ENCODE measurements at regions of chr10 and their contacts with region 1.

Region 1: DNA sequence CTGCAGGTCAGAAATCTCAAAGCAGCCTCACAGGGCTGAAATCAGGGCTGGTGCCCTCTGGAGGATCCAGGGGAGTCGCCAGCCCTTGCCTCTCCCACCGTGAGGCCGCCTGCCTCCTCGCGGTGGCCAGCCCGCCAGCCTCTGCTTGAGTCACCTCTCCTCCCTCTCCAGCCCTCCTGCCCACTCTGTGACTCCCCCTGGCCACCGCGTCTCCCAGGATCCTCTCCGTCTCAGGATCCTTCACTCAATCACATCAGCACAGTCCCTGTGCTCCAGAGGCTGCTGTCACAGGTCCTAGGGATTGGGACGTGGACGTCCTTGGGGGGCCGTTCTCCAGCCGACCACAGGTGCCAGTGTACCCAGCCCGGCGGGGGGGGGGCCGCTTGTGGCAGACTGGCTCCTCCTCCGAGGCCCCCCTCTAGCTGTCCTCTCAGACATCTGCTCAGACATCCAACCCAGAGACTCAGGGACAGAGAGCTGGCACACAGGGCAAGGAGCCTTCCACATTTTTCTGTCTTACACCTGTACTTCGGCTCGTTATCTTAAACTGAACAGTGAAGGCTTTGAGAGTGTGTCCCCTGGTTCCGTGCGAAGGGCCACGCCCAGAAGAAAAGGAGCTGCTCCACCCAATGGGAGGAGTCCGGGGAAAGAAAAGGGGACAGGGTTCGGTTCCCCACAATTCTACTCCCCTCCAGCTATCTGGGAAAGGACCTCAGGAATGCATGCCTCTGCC is 9.4 kb upstream of the PPP2R2D start:
- DNase-seq: peak; percentile 62 to 69 (median 64)
- ATAC-seq: peak; percentile 85
- H3K4me3 ChIP-seq: peak overlapping the region; percentile 35
- H3K27ac ChIP-seq: peak overlapping the region; percentile 78
- H3K4me1 ChIP-seq: peaks cover 35 to 47% of the 10 kb centered on the region in 2 experiments
- H3K27me3 ChIP-seq: no peaks in the 10 kb centered on the region
- CTCF ChIP-seq: peak; percentile 30 to 88 (median 68); a peak in 5 of 6 replicates
- EP300 ChIP-seq: no peak
- POLR2A ChIP-seq: no peak
- RAD21 ChIP-seq: peak in 1 of 2 experiments; percentile 19; a peak in 1 of 4 replicates

Region 2: GRCh38 chr10:131928248-131929095 is 37.1 kb after region 1 on chr10:
- CTCF ChIA-PET with region 1: no interaction called
- POLR2A ChIA-PET with region 1: interaction called, 14 read pairs
- in situ Hi-C with region 1: loop called (anchors 5 kb)
- intact Hi-C with region 1: loop called (anchors 5 kb)
- DNase-seq: peak in 2 of 4 experiments; percentile 37 to 42
- ATAC-seq: peak; percentile 69
- H3K4me3 ChIP-seq: no peak overlapping the region
- H3K27ac ChIP-seq: peak overlapping the region; percentile 60; the same call in 2 of the 3 replicates
- H3K4me1 ChIP-seq: peaks cover 36 to 55% of the 10 kb centered on the region in 2 experiments; a peak in 4 of 5 replicates
- H3K27me3 ChIP-seq: no peaks in the 10 kb centered on the region; a peak in 1 of 5 replicates
- CTCF ChIP-seq: no peak
- EP300 ChIP-seq: no peak
- POLR2A ChIP-seq: no peak
- RAD21 ChIP-seq: no peak

Region 3: GRCh38 chr10:132665946-132666704 is 774.8 kb after region 1 on chr10:
- CTCF ChIA-PET with region 1: no interaction called
- POLR2A ChIA-PET with region 1: no interaction called
- in situ Hi-C with region 1: no loop called
- intact Hi-C with region 1: no loop called
- DNase-seq: peak in 3 of 4 experiments; percentile 20 to 29 (median 22)
- ATAC-seq: no peak
- H3K4me3 ChIP-seq: no peak overlapping the region
- H3K27ac ChIP-seq: peak overlapping the region; percentile 52; the same call in 2 of the 3 replicates
- H3K4me1 ChIP-seq: peaks cover 0 to 15% of the 10 kb centered on the region in 2 experiments; a peak in 3 of 5 replicates
- H3K27me3 ChIP-seq: no peaks in the 10 kb centered on the region
- CTCF ChIP-seq: no peak
- EP300 ChIP-seq: peak; percentile 34; the same call in 1 of the 2 replicates
- POLR2A ChIP-seq: no peak
- RAD21 ChIP-seq: no peak

Measured in K562 (cell line).